ENCODE measurements at regions of chrX and their contacts with region 1.

Region 1: GRCh38 chrX:115560978-115561604 is at the start of gene PLS3:
- DNase-seq: peak; percentile 83
- ATAC-seq: peak; percentile 86
- H3K4me3 ChIP-seq: peak within 1 kb of the TSS; percentile 99
- H3K27ac ChIP-seq: peak within 1 kb of the TSS; percentile 99
- H3K4me1 ChIP-seq: peaks cover 3% of the 10 kb centered on the region
- H3K27me3 ChIP-seq: peaks cover 2% of the 10 kb centered on the region; the same call in 1 of the 2 replicates
- CTCF ChIP-seq: no peak
- POLR2A ChIP-seq: peak; percentile 79
- RAD21 ChIP-seq: no peak
- total RNA-seq, gene PLS3: 252 and 370 TPM in 2 replicates

Region 2: GRCh38 chrX:115233497-115234455 is 327.3 kb before region 1 on chrX and contains the start of gene LRCH2:
- CTCF ChIA-PET with region 1: no interaction called
- POLR2A ChIA-PET with region 1: no interaction called
- dilution Hi-C with region 1: no loop called
- in situ Hi-C with region 1: no loop called
- intact Hi-C with region 1: loop called (anchors 5 kb)
- DNase-seq: peak; percentile 41
- ATAC-seq: peak; percentile 82
- H3K4me3 ChIP-seq: peak within 1 kb of the TSS; percentile 89
- H3K27ac ChIP-seq: peak within 1 kb of the TSS; percentile 90
- H3K4me1 ChIP-seq: 0 out of 2 replicates have a peak, but pooled peaks cover 2% of the 10 kb centered on the region
- H3K27me3 ChIP-seq: no peaks in the 10 kb centered on the region; the same call in 1 of the 2 replicates
- CTCF ChIP-seq: no peak
- POLR2A ChIP-seq: no peak
- RAD21 ChIP-seq: no peak
- total RNA-seq, gene LRCH2: 4.3 and 8.1 TPM in 2 replicates

Region 3: GRCh38 chrX:115330498-115331168 is 230.5 kb before region 1 on chrX:
- CTCF ChIA-PET with region 1: no interaction called
- POLR2A ChIA-PET with region 1: no interaction called
- dilution Hi-C with region 1: no loop called
- in situ Hi-C with region 1: no loop called
- intact Hi-C with region 1: loop called (anchors 2 kb)
- DNase-seq: peak; percentile 76
- ATAC-seq: peak; percentile 76
- H3K4me3 ChIP-seq: no peak overlapping the region
- H3K27ac ChIP-seq: no peak overlapping the region
- H3K4me1 ChIP-seq: no peaks in the 10 kb centered on the region
- H3K27me3 ChIP-seq: peaks cover 8% of the 10 kb centered on the region
- CTCF ChIP-seq: peak; percentile 87
- POLR2A ChIP-seq: no peak
- RAD21 ChIP-seq: peak; percentile 88

Region 4: DNA sequence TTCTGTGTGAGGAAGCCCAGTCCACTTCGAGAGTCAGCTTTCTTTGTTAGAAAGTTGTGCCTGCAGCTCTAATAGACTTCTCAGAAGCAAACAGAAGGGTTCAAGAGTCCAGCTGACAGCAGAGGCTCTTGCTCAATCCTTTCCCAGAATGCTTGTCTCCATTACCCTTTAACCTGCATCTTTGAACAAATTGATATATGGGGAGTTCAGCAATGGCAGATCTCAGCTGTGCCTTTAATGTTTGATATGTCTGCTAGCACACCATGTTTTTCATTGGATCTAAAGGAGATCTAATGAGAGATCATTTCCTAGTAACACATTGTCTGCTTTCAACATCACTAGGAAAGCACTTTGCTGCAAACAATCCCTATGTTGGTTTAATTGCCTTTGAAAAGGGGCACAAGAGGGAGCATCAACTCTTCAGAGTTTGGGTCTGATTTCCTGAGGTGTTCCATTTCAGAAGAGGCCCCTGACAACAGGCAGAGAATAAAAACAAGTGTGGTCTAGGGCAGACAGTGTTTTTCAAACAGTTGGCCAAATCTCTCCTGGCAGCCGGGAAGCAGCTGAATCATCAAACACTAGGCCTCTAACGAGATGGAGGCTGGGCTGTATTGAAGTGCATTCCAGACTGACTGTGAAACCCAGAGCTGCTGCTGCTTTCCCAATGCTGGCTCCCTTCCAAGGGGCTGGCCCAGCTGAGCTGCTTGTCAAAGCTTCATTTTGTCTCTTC is 216.0 kb before region 1 on chrX:
- CTCF ChIA-PET with region 1: interaction called, 6 read pairs
- POLR2A ChIA-PET with region 1: no interaction called
- dilution Hi-C with region 1: no loop called
- in situ Hi-C with region 1: loop called (anchors 5 kb)
- intact Hi-C with region 1: no loop called
- DNase-seq: peak; percentile 95
- ATAC-seq: peak; percentile 93
- H3K4me3 ChIP-seq: no peak overlapping the region
- H3K27ac ChIP-seq: peak overlapping the region; percentile 76; the same call in 1 of the 2 replicates
- H3K4me1 ChIP-seq: no peaks in the 10 kb centered on the region; the same call in 1 of the 2 replicates
- H3K27me3 ChIP-seq: no peaks in the 10 kb centered on the region
- CTCF ChIP-seq: no peak
- POLR2A ChIP-seq: no peak
- RAD21 ChIP-seq: no peak

Region 5: DNA sequence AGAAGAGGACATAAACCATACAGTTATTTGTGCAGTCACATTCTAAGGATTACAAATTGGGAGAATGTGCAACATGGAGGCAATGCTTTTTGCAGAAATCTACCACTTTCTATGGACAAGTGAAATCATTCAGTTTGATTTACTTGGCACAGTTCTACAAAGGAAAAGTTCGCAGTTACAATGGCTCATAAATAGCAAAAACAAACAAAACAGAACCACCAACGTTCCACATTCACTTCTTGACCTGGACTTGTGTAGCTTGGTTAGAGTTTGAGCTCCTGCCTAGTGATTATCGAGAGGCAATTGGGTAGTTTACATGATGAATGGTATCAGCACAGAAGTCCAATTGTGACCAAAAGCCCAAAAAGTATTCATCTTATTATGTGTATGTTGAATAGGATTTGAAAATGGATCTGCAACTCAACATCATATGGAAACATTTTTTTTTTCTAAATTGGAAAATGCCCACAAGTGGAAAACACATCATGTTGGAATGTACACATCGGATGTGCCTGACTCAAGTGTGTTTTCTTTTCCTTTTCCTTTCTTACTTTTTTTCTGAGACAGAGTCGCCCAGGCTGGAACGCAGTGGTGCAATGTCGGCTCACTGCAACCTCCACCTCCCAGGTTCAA is 147.7 kb before region 1 on chrX:
- CTCF ChIA-PET with region 1: no interaction called
- POLR2A ChIA-PET with region 1: no interaction called
- dilution Hi-C with region 1: no loop called
- in situ Hi-C with region 1: no loop called
- intact Hi-C with region 1: loop called (anchors 2 kb)
- DNase-seq: peak; percentile 72
- ATAC-seq: peak; percentile 72
- H3K4me3 ChIP-seq: no peak overlapping the region
- H3K27ac ChIP-seq: peak overlapping the region; percentile 40; the same call in 1 of the 2 replicates
- H3K4me1 ChIP-seq: peaks cover 2% of the 10 kb centered on the region; the same call in 1 of the 2 replicates
- H3K27me3 ChIP-seq: peaks cover 1% of the 10 kb centered on the region
- CTCF ChIP-seq: no peak
- POLR2A ChIP-seq: no peak
- RAD21 ChIP-seq: no peak